Activated CD4-positive, alpha-beta memory T cell treated with anti-CD3 and anti-CD28 coated beads for 36 hours (primary cell): ENCODE measurements at regions of chr12 and their contacts with region 1.

Region 1: GRCh38 chr12:3299929-3300832 is 190.8 kb upstream of the PRMT8 start:
- DNase-seq: peak; percentile 87
- H3K4me3 Mint-ChIP-seq: peak overlapping the region; percentile 55
- H3K27ac Mint-ChIP-seq: peak overlapping the region; percentile 62
- H3K4me1 Mint-ChIP-seq: peaks cover 11% of the 10 kb centered on the region
- H3K27me3 Mint-ChIP-seq: peaks cover 7% of the 10 kb centered on the region

Region 2: GRCh38 chr12:3288690-3289089 is 11.5 kb before region 1 on chr12:
- CTCF ChIA-PET with region 1: interaction called, 39 read pairs
- POLR2A ChIA-PET with region 1: no interaction called
- intact Hi-C with region 1: no loop called
- DNase-seq: no peak
- H3K4me3 Mint-ChIP-seq: no peak overlapping the region
- H3K27ac Mint-ChIP-seq: no peak overlapping the region
- H3K4me1 Mint-ChIP-seq: no peaks in the 10 kb centered on the region
- H3K27me3 Mint-ChIP-seq: no peaks in the 10 kb centered on the region

Region 3: GRCh38 chr12:3319723-3320492 is 19.7 kb after region 1 on chr12:
- CTCF ChIA-PET with region 1: interaction called, 59 read pairs
- POLR2A ChIA-PET with region 1: no interaction called
- intact Hi-C with region 1: no loop called
- DNase-seq: no peak
- H3K4me3 Mint-ChIP-seq: no peak overlapping the region
- H3K27ac Mint-ChIP-seq: no peak overlapping the region
- H3K4me1 Mint-ChIP-seq: no peaks in the 10 kb centered on the region
- H3K27me3 Mint-ChIP-seq: peaks cover 7% of the 10 kb centered on the region

Region 4: GRCh38 chr12:3770886-3771285 is 470.7 kb after region 1 on chr12:
- CTCF ChIA-PET with region 1: interaction called, 32 read pairs
- POLR2A ChIA-PET with region 1: no interaction called
- intact Hi-C with region 1: no loop called
- DNase-seq: no peak
- H3K4me3 Mint-ChIP-seq: no peak overlapping the region
- H3K27ac Mint-ChIP-seq: no peak overlapping the region
- H3K4me1 Mint-ChIP-seq: peaks cover 10% of the 10 kb centered on the region
- H3K27me3 Mint-ChIP-seq: no peaks in the 10 kb centered on the region

Region 5: DNA sequence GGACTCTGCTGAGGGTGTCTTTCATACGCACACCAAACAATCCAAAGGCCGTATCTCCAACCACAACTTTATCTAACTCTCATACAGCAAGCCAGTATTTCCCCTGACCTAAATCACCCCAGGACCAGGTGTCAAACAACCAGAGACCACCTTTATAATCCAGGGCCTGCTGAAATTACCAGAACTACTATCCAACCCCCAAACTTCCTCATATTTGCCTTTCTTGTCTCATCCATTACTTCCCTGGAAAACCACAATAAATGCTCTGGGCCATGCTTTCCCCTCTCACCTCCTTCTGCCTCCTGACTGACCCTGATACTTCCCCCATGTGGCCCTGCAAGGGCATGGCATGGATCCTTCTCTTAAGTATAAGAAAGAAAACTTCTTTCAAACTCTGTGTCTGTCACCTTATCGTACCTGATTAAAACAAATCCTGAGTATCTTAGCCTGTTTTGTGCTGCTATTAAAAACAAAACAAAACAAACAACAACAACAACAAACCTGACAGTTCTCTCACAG is 497.4 kb after region 1 on chr12:
- CTCF ChIA-PET with region 1: interaction called, 53 read pairs
- POLR2A ChIA-PET with region 1: no interaction called
- intact Hi-C with region 1: no loop called
- DNase-seq: no peak
- H3K4me3 Mint-ChIP-seq: no peak overlapping the region
- H3K27ac Mint-ChIP-seq: no peak overlapping the region
- H3K4me1 Mint-ChIP-seq: peaks cover 5% of the 10 kb centered on the region
- H3K27me3 Mint-ChIP-seq: no peaks in the 10 kb centered on the region

Region 6: DNA sequence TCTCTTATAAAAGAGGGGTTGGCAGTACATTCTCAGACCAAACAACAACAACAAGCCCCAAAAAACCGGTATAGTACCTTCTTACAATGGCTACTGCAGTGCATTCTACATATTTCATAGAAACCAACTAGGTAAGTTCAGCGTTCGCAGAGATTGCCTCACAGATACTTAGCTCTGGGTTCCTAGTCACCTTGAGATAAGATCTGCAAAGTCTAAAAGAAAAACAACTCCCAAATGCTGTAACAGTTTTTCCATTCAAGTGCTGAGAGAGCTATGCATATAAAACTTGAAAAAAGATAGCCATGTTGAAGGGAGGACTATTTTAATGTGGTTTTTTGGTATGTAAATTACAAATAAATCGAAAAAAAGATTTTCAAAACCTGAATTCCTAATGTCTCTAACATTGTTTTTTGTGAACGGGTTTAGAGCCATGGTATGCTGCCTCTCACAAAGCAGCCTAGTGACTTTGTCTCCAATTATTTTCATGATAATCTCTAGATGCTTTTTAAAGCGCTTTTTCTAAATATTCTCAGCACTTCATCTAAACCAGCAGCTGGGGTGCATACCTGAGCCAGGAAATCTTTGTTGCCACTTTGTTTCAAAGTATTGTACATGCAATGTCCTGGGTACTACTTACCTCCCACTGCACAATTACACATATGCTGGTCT is 509.3 kb after region 1 on chr12:
- CTCF ChIA-PET with region 1: interaction called, 114 read pairs
- POLR2A ChIA-PET with region 1: no interaction called
- intact Hi-C with region 1: loop called (anchors 1 kb)
- DNase-seq: no peak
- H3K4me3 Mint-ChIP-seq: no peak overlapping the region
- H3K27ac Mint-ChIP-seq: no peak overlapping the region
- H3K4me1 Mint-ChIP-seq: peaks cover 16% of the 10 kb centered on the region
- H3K27me3 Mint-ChIP-seq: no peaks in the 10 kb centered on the region